CD4-positive, alpha-beta T cell (primary cell): ENCODE measurements at regions of chr18 and their contacts with region 1.

Region 1: GRCh38 chr18:35407871-35408481 is 30.8 kb upstream of the ZNF396 start:
- DNase-seq: peak in 8 of 14 experiments; percentile 5 to 78 (median 44)
- ATAC-seq: peak; percentile 75
- H3K4me3 ChIP-seq: no peak overlapping the region
- H3K4me3 Mint-ChIP-seq: no peak overlapping the region
- H3K27ac ChIP-seq: no peak overlapping the region
- H3K27ac Mint-ChIP-seq: no peak overlapping the region
- H3K4me1 ChIP-seq: peaks cover 6% of the 10 kb centered on the region
- H3K4me1 Mint-ChIP-seq: peaks cover 24% of the 10 kb centered on the region
- H3K27me3 ChIP-seq: no peaks in the 10 kb centered on the region
- H3K27me3 Mint-ChIP-seq: peaks cover 10% of the 10 kb centered on the region
- CTCF ChIP-seq: peak; percentile 94

Region 2: GRCh38 chr18:35513181-35513936 is 105.4 kb after region 1 on chr18:
- CTCF ChIA-PET with region 1: no interaction called
- POLR2A ChIA-PET with region 1: no interaction called
- intact Hi-C with region 1: loop called in 1 of 2 experiments (anchors 5 kb)
- DNase-seq: no peak
- ATAC-seq: no peak
- H3K4me3 ChIP-seq: no peak overlapping the region
- H3K4me3 Mint-ChIP-seq: no peak overlapping the region
- H3K27ac ChIP-seq: no peak overlapping the region
- H3K27ac Mint-ChIP-seq: no peak overlapping the region
- H3K4me1 ChIP-seq: no peaks in the 10 kb centered on the region
- H3K4me1 Mint-ChIP-seq: no peaks in the 10 kb centered on the region
- H3K27me3 ChIP-seq: no peaks in the 10 kb centered on the region
- H3K27me3 Mint-ChIP-seq: no peaks in the 10 kb centered on the region
- CTCF ChIP-seq: no peak

Region 3: GRCh38 chr18:36179562-36180355 is 771.8 kb after region 1 on chr18:
- CTCF ChIA-PET with region 1: no interaction called
- POLR2A ChIA-PET with region 1: no interaction called
- intact Hi-C with region 1: no loop called
- DNase-seq: peak in 1 of 14 experiments; percentile 14
- ATAC-seq: no peak
- H3K4me3 ChIP-seq: no peak overlapping the region
- H3K4me3 Mint-ChIP-seq: no peak overlapping the region
- H3K27ac ChIP-seq: no peak overlapping the region
- H3K27ac Mint-ChIP-seq: peak overlapping the region; percentile 6
- H3K4me1 ChIP-seq: peaks cover 7% of the 10 kb centered on the region
- H3K4me1 Mint-ChIP-seq: peaks cover 6% of the 10 kb centered on the region
- H3K27me3 ChIP-seq: no peaks in the 10 kb centered on the region
- H3K27me3 Mint-ChIP-seq: no peaks in the 10 kb centered on the region
- CTCF ChIP-seq: no peak